K562 (cell line): ENCODE measurements at regions of chr6 and their contacts with region 1.

Region 1: DNA sequence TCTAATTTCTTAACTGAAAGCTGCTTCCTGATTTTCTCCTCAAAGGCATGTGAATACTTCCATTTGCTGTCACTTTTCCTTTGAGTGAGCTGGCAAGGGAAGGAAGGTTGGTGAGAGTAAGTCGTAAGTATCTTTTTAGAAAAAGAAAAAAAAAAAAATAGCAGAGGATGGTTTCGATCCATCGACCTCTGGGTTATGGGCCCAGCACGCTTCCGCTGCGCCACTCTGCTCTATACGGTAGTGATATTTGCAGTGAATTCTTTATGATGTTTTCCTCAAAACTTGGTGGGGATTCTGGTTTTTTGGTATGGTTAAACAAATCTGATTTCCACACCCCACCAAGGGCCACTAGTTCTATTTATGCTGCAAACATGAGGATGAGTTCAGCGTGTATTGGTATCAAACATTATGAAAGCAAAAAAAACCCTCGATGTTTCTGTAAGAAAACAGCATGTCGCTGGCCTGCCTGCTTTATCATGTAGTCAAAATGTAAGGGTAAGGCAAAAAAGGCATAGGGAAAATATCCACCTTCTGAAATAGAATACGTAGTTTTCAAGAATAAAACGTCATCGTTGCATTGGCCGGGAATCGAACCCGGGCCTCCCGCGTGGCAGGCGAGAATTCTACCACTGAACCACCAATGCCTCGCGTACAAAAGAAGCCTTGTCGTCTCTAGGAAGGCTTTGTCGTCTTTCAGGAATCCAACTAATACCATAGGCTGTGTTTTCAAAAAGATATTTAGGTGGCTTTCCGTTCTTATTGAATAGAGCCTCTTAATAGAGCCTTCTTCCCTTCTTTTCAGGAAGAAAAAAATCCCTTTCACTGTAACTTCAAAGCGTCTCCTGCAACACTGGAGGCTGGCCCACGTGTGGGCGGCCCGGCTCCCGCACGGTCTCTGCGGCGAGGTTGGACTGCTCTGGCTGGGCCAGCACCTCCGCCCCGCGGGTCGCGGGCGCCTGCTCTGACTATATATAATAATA is 9.6 kb downstream of the OR2B2 start:
- DNase-seq: peak; percentile 69 to 88 (median 75)
- ATAC-seq: peak; percentile 90
- H3K4me3 ChIP-seq: peak overlapping the region; percentile 39
- H3K27ac ChIP-seq: peak overlapping the region; percentile 79
- H3K4me1 ChIP-seq: peaks cover 7 to 28% of the 10 kb centered on the region in 2 experiments; a peak in 4 of 5 replicates
- H3K27me3 ChIP-seq: no peaks in the 10 kb centered on the region
- CTCF ChIP-seq: no peak
- EP300 ChIP-seq: peak; percentile 76
- POLR2A ChIP-seq: peak; percentile 99
- RAD21 ChIP-seq: peak; percentile 25 to 32; a peak in 3 of 4 replicates

Region 2: DNA sequence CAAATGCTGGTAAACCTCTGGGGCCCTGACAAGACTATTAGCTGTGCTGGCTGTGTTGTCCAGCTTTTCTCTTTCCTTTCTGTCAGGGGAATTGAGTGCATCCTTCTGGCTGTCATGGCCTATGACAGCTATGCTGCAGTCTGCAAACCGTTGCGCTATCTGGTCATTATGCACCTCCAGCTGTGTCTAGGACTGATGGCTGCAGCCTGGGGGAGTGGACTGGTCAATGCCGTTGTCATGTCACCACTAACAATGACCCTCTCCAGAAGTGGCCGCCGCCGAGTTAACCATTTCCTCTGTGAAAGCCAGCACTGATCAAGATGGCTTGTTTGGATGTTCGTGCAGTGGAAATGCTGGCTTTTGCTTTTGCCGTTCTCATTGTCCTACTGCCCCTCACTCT is 74.8 kb after region 1 on chr6:
- CTCF ChIA-PET with region 1: no interaction called
- POLR2A ChIA-PET with region 1: no interaction called
- in situ Hi-C with region 1: no loop called
- intact Hi-C with region 1: no loop called
- DNase-seq: peak in 3 of 4 experiments; percentile 18 to 68 (median 29)
- ATAC-seq: peak; percentile 98
- H3K4me3 ChIP-seq: no peak overlapping the region
- H3K27ac ChIP-seq: no peak overlapping the region
- H3K4me1 ChIP-seq: peaks cover 0 to 4% of the 10 kb centered on the region in 2 experiments; a peak in 1 of 5 replicates
- H3K27me3 ChIP-seq: no peaks in the 10 kb centered on the region
- CTCF ChIP-seq: peak in 2 of 3 experiments; percentile 15; a peak in 1 of 6 replicates
- EP300 ChIP-seq: peak; percentile 66
- POLR2A ChIP-seq: no peak
- RAD21 ChIP-seq: peak; percentile 13 to 48; a peak in 2 of 4 replicates

Region 3: GRCh38 chr6:28080631-28081485 is 178.2 kb after region 1 on chr6:
- CTCF ChIA-PET with region 1: no interaction called
- POLR2A ChIA-PET with region 1: no interaction called
- in situ Hi-C with region 1: no loop called
- intact Hi-C with region 1: loop called (anchors 5 kb)
- DNase-seq: peak; percentile 91 to 99 (median 93)
- ATAC-seq: peak; percentile 91
- H3K4me3 ChIP-seq: peak overlapping the region; percentile 96
- H3K27ac ChIP-seq: peak overlapping the region; percentile 94
- H3K4me1 ChIP-seq: peaks cover 0 to 2% of the 10 kb centered on the region in 2 experiments; a peak in 4 of 5 replicates
- H3K27me3 ChIP-seq: no peaks in the 10 kb centered on the region
- CTCF ChIP-seq: no peak; a peak in 1 of 6 replicates
- EP300 ChIP-seq: peak; percentile 68; the same call in 1 of the 2 replicates
- POLR2A ChIP-seq: peak; percentile 79
- RAD21 ChIP-seq: no peak; a peak in 2 of 4 replicates

Region 4: DNA sequence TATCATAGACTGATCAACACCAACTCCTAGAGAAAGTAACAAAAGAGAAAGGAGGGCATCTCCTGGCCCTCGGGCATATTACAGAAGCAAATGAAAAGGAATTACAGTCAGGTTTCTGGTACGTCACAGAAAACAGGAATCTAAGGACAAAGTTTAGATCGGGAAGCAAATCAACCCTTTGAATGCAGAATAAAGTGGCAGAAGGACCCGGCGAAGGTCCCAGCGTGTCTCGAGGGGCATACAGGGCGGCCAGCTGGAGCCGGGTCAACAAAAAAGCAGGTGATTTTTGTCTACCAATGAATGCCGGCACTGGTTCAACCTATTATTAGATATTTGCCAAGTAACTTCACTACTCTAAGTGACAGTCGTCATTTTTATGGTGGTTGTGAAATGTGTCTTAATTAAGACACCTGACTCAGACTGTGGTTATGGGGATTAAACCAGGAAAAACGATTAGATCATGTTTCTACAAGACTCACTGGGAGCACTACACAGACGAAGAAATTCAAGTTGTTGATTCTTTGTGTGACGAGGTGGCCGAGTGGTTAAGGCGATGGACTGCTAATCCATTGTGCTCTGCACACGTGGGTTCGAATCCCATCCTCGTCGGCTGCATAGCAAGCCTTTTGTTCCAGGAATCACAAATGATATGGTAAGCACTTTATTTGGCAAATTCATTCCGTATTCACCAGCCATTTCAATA is 310.0 kb after region 1 on chr6:
- CTCF ChIA-PET with region 1: no interaction called
- POLR2A ChIA-PET with region 1: no interaction called
- in situ Hi-C with region 1: no loop called
- intact Hi-C with region 1: loop called (anchors 2 kb)
- DNase-seq: peak; percentile 80 to 95 (median 82)
- ATAC-seq: peak; percentile 78
- H3K4me3 ChIP-seq: peak overlapping the region; percentile 48
- H3K27ac ChIP-seq: peak overlapping the region; percentile 74
- H3K4me1 ChIP-seq: peaks cover 16 to 23% of the 10 kb centered on the region in 2 experiments
- H3K27me3 ChIP-seq: no peaks in the 10 kb centered on the region
- CTCF ChIP-seq: peak in 2 of 3 experiments; percentile 46 to 55; a peak in 5 of 6 replicates
- EP300 ChIP-seq: peak; percentile 84
- POLR2A ChIP-seq: no peak
- RAD21 ChIP-seq: peak; percentile 51 to 60; a peak in 3 of 4 replicates

Region 5: DNA sequence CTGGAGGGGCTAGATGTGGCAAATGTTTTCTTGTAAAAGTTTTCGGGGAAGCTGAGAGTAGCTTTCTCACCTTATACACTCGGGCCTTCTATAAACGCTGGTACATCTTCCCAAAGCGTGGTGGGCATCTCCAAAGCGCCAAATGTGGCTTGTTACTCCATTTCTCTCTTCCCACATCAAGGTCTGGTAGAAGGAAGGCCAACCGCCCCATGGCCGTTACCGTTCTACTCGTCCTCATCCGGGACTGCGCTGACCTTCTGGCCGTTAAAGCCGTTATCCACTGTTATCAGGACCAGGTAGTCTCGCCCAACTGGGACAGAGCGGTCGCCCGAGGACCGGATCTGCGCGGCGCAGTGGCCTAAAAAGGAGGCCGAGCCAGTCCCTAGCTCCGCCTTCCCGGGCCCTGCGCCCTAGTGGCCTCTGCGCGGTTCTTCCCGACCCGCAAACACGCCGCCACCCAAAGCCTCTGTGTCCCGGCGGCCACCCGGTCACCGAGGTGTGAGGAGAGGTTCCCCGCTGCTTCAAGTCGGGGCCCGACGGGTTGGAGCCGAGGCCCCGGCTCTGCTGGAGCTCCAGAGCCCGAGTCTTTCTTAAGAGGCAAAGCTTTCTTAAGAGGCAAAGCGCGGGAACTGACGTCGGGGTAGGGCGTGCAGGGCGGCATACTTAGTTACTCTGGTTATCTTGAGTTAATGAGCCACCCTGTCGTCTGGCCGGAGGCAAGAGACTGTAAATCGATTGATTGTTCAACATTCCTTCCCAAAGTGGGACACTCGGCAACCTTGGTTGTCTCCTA is 713.5 kb after region 1 on chr6:
- CTCF ChIA-PET with region 1: no interaction called
- POLR2A ChIA-PET with region 1: no interaction called
- in situ Hi-C with region 1: no loop called
- intact Hi-C with region 1: no loop called
- DNase-seq: peak; percentile 92 to 98 (median 94)
- ATAC-seq: peak; percentile 91
- H3K4me3 ChIP-seq: peak overlapping the region; percentile 44
- H3K27ac ChIP-seq: peak overlapping the region; percentile 86
- H3K4me1 ChIP-seq: peaks cover 13 to 22% of the 10 kb centered on the region in 2 experiments; a peak in 4 of 5 replicates
- H3K27me3 ChIP-seq: no peaks in the 10 kb centered on the region
- CTCF ChIP-seq: peak; percentile 28 to 33 (median 29); a peak in 3 of 6 replicates
- EP300 ChIP-seq: peak; percentile 98
- POLR2A ChIP-seq: peak; percentile 97
- RAD21 ChIP-seq: no peak; a peak in 1 of 4 replicates